ENCODE measurements at regions of chr3 and their contacts with region 1.

Region 1: GRCh38 chr3:129249276-129250065 is at the start of gene COPG1:
- DNase-seq: peak; percentile 89
- H3K4me3 Mint-ChIP-seq: peak within 1 kb of the TSS; percentile 93
- H3K27ac Mint-ChIP-seq: peak within 1 kb of the TSS; percentile 98
- H3K4me1 Mint-ChIP-seq: peaks cover 27% of the 10 kb centered on the region
- H3K27me3 Mint-ChIP-seq: no peaks in the 10 kb centered on the region
- CTCF ChIP-seq: no peak
- total RNA-seq, gene COPG1: 225 and 298 TPM in 2 replicates

Region 2: DNA sequence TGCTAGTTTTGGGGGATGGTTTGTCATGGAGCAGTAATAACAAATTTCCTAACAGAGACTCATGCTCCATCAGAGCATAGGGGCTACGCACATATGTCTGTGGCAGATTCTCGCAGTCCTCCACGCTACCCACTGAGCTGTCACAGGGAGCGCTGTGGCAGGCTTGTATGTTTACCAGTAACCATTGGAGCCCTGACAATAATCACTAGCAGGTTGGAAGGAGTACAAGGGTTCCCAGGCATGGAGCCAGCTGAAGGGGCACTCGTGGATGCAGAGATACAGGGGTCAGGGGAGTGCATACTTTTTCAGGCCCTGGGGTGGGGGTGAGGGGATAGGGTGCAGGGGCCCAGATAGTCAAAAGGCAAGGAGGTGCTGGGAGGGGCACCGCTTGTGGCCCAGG is 196.8 kb before region 1 on chr3:
- CTCF ChIA-PET with region 1: interaction called, 61 read pairs
- POLR2A ChIA-PET with region 1: interaction called, 14 read pairs
- intact Hi-C with region 1: loop called (anchors 1 kb)
- DNase-seq: no peak
- H3K4me3 Mint-ChIP-seq: no peak overlapping the region
- H3K27ac Mint-ChIP-seq: no peak overlapping the region
- H3K4me1 Mint-ChIP-seq: peaks cover 9% of the 10 kb centered on the region
- H3K27me3 Mint-ChIP-seq: peaks cover 16% of the 10 kb centered on the region
- CTCF ChIP-seq: no peak

Region 3: DNA sequence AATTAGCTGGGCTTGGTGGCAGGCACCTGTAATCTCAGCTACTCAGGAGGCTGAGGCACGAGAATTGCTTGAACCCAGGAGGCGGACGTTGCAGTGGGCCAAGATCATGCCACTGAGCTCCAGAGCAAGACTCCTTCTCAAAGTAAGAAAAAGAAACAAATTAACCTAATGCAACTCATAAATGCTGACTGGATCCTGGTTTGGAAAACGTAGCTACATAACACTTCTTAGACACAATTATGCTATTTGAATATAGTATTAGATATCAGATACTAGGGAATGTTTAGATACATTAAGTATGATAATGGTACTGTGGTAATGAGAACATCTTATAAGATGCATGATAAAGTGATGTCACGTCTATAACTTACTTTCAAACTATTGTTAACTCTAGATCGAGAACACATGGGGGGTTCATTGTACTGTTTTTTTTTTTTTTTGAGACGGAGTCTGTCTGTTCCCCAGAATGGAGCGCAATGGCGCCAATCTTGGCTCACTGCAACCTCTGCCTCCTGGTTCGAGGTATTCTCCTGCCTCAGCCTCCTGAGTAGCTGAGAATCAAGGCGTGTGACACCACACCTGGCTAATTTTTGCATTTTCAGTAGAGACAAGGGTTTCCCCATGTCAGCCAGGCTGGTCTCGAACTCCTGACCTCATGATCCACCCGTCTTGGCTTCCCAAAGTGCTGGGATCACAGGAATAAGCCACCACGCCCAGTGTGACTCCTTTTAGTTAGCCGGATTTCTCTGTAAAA is 82.7 kb before region 1 on chr3:
- CTCF ChIA-PET with region 1: interaction called, 50 read pairs
- POLR2A ChIA-PET with region 1: interaction called, 22 read pairs
- intact Hi-C with region 1: loop called (anchors 1 kb)
- DNase-seq: no peak
- H3K4me3 Mint-ChIP-seq: no peak overlapping the region
- H3K27ac Mint-ChIP-seq: no peak overlapping the region
- H3K4me1 Mint-ChIP-seq: peaks cover 17% of the 10 kb centered on the region
- H3K27me3 Mint-ChIP-seq: no peaks in the 10 kb centered on the region
- CTCF ChIP-seq: no peak

Region 4: DNA sequence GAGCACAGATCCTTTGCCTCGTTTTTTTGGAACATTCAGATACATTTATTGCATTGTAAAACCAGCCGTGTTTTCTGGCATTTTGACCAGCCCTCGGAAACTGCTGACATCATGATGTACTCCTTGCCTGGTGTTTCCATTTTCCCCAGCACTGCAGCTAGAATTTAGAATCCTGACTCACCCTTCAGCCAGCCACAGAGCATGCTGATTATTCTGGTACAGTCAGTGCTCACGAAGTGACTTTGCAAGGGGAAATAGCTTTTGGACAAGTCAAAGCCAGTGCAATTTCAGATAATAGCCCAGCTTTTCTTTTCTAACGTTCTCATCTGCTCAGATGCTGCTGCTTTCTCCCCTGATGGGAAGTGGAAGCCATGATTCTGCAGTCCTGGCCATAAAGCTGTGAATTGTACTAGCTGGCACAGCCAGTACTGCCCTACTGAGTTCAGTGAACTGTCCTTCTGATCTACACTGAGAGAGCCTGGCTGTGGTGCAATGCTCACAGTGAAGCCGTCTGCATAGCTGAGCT is 53.7 kb before region 1 on chr3:
- CTCF ChIA-PET with region 1: interaction called, 39 read pairs
- POLR2A ChIA-PET with region 1: interaction called, 37 read pairs
- intact Hi-C with region 1: loop called (anchors 1 kb)
- DNase-seq: peak; percentile 83
- H3K4me3 Mint-ChIP-seq: peak overlapping the region; percentile 50
- H3K27ac Mint-ChIP-seq: peak overlapping the region; percentile 57
- H3K4me1 Mint-ChIP-seq: peaks cover 9% of the 10 kb centered on the region
- H3K27me3 Mint-ChIP-seq: no peaks in the 10 kb centered on the region
- CTCF ChIP-seq: no peak

Region 5: GRCh38 chr3:129233538-129233937 is 15.9 kb before region 1 on chr3:
- CTCF ChIA-PET with region 1: interaction called, 20 read pairs
- POLR2A ChIA-PET with region 1: interaction called, 29 read pairs
- intact Hi-C with region 1: no loop called
- DNase-seq: no peak
- H3K4me3 Mint-ChIP-seq: no peak overlapping the region
- H3K27ac Mint-ChIP-seq: no peak overlapping the region
- H3K4me1 Mint-ChIP-seq: peaks cover 28% of the 10 kb centered on the region
- H3K27me3 Mint-ChIP-seq: no peaks in the 10 kb centered on the region
- CTCF ChIP-seq: no peak

Region 6: GRCh38 chr3:129278439-129278970 is 29.0 kb after region 1 on chr3 and contains the start of gene HMCES:
- CTCF ChIA-PET with region 1: interaction called, 3 read pairs
- POLR2A ChIA-PET with region 1: interaction called, 23 read pairs
- intact Hi-C with region 1: no loop called
- DNase-seq: peak; percentile 91
- H3K4me3 Mint-ChIP-seq: peak within 1 kb of the TSS; percentile 97
- H3K27ac Mint-ChIP-seq: peak within 1 kb of the TSS; percentile 90
- H3K4me1 Mint-ChIP-seq: peaks cover 10% of the 10 kb centered on the region
- H3K27me3 Mint-ChIP-seq: no peaks in the 10 kb centered on the region
- CTCF ChIP-seq: no peak
- total RNA-seq, gene HMCES: 29.4 and 42.8 TPM in 2 replicates